Gastrocnemius medialis (tissue), 4 donors: ENCODE measurements at regions of chr11 and their contacts with region 1.

Region 1: DNA sequence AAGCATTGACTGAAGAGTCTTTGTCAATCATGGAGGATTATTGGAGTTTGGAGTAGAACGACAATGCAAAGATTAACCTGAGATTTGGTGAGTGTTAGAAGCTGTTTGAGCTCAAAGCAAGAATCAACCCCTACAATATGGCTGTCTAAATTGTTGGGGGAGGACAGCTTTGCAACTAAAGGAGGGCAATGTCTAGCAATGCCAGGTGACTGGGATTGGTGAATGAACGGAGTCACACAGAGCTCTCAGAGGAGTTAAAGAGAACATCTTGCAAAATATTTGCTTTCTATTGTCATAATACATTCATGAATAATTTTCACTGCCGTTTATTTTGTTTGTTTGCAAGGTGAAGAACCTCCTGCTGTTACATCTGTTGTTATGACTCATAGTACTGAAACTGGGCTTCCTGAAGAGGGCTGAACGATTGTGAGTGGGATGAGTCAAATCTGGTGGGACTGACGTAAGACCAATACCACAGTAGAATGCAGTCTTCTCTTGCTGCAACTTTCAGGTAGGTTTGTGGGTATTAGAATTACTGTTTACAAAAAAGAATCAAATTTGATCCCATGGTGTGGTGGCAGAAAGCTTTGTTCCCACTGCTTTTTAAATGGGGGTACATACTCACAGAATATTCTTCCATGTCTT is 281.9 kb downstream of the CADM1 start:
- DNase-seq: no peak
- ATAC-seq: peak; percentile 60 to 63
- H3K4me3 ChIP-seq: no peak overlapping the region
- H3K27ac ChIP-seq: peak overlapping the region in 3 of 4 donors; percentile 44 to 86 (median 86)
- H3K4me1 ChIP-seq: peaks cover 29 to 40% of the 10 kb centered on the region in 2 donors
- H3K27me3 ChIP-seq: no peaks in the 10 kb centered on the region
- CTCF ChIP-seq: no peak
- POLR2A ChIP-seq: no peak

Region 2: GRCh38 chr11:114989536-114989935 is 232.8 kb before region 1 on chr11:
- in situ Hi-C with region 1: no loop called
- intact Hi-C with region 1: no loop called
- DNase-seq: no peak
- ATAC-seq: no peak
- H3K4me3 ChIP-seq: no peak overlapping the region
- H3K27ac ChIP-seq: no peak overlapping the region
- H3K4me1 ChIP-seq: no peaks in the 10 kb centered on the region
- H3K27me3 ChIP-seq: no peaks in the 10 kb centered on the region
- CTCF ChIP-seq: no peak
- POLR2A ChIP-seq: no peak

Region 3: GRCh38 chr11:115083144-115083806 is 139.1 kb before region 1 on chr11:
- in situ Hi-C with region 1: no loop called
- intact Hi-C with region 1: loop called (anchors 5 kb)
- DNase-seq: no peak
- ATAC-seq: no peak
- H3K4me3 ChIP-seq: no peak overlapping the region
- H3K27ac ChIP-seq: peak overlapping the region in 1 of 4 donors; percentile 60
- H3K4me1 ChIP-seq: peaks cover 9 to 15% of the 10 kb centered on the region in 2 donors
- H3K27me3 ChIP-seq: no peaks in the 10 kb centered on the region
- CTCF ChIP-seq: no peak
- POLR2A ChIP-seq: no peak

Region 4: GRCh38 chr11:115185507-115185906 is 36.8 kb before region 1 on chr11:
- in situ Hi-C with region 1: no loop called
- intact Hi-C with region 1: loop called (anchors 1 kb)
- DNase-seq: peak; percentile 24 to 46
- ATAC-seq: peak; percentile 98 to 99
- H3K4me3 ChIP-seq: peak overlapping the region; percentile 12 to 27 (median 25)
- H3K27ac ChIP-seq: peak overlapping the region; percentile 73 to 89 (median 77)
- H3K4me1 ChIP-seq: peaks cover 39 to 55% of the 10 kb centered on the region in 2 donors
- H3K27me3 ChIP-seq: no peaks in the 10 kb centered on the region
- CTCF ChIP-seq: no peak
- POLR2A ChIP-seq: peak; percentile 34 to 47

Region 5: GRCh38 chr11:115300660-115301428 is 78.5 kb after region 1 on chr11:
- in situ Hi-C with region 1: no loop called
- intact Hi-C with region 1: loop called (anchors 5 kb)
- DNase-seq: no peak
- ATAC-seq: no peak
- H3K4me3 ChIP-seq: no peak overlapping the region
- H3K27ac ChIP-seq: no peak overlapping the region
- H3K4me1 ChIP-seq: peaks cover 5 to 10% of the 10 kb centered on the region in 2 donors
- H3K27me3 ChIP-seq: no peaks in the 10 kb centered on the region
- CTCF ChIP-seq: no peak
- POLR2A ChIP-seq: no peak

Region 6: GRCh38 chr11:115504276-115505158 is 282.2 kb after region 1 on chr11 and contains the start of gene CADM1:
- in situ Hi-C with region 1: no loop called
- intact Hi-C with region 1: loop called (anchors 5 kb)
- DNase-seq: peak; percentile 93 to 95
- ATAC-seq: peak; percentile 82 to 84
- H3K4me3 ChIP-seq: peak within 1 kb of the TSS; percentile 66 to 75 (median 74)
- H3K27ac ChIP-seq: peak within 1 kb of the TSS; percentile 83 to 87 (median 86)
- H3K4me1 ChIP-seq: peaks cover 6 to 11% of the 10 kb centered on the region in 2 donors
- H3K27me3 ChIP-seq: peaks cover 0 to 8% (median 0%) of the 10 kb centered on the region in 3 donors
- CTCF ChIP-seq: peak; percentile 48 to 70 (median 60)
- POLR2A ChIP-seq: peak; percentile 92 to 96
- total RNA-seq, gene CADM1: 1.2 to 2.5 (median 2.2) TPM